ENCODE measurements at regions of chr13 and their contacts with region 1.

Region 1: DNA sequence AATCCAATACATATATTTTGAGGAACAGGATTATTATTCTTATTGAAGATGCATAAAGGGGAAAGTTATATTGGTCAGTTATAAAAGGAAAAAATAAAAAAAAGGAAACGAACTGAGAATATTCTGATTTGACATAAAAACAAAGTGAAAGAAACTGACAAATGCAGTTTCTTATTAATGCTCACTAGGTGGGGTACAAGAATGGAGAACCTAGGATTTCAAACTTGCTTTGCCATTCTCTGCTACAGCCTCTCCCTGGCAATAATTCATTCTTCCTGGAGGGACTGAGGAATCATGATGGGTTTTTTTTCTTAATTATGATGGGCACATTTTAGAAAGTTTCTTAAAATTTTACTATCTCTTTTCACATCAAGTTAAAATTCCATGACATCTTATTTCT is 154.9 kb downstream of the PCDH9 start:
- DNase-seq: peak in 2 of 42 donors; percentile 34

Region 2: GRCh38 chr13:66915596-66916185 is 159.5 kb before region 1 on chr13:
- intact Hi-C with region 1: no loop called
- DNase-seq: no peak

Region 3: GRCh38 chr13:66994097-66994496 is 81.1 kb before region 1 on chr13:
- intact Hi-C with region 1: loop called (anchors 10 kb)
- DNase-seq: peak; percentile 67 to 95 (median 88)